Activated T-helper 2 cell treated with anti-CD3 and anti-CD28 coated beads, Interferon-gamma antibody, Interleukin-2, Interleukin-4, amounts not matched to agents 10 μg/mL and 5 μg/mL and 100 μg/mL, durations not matched to agents 14 hours and 24 hours and 36 hours (primary cell): ENCODE measurements at regions of chr3 and their contacts with region 1.

Region 1: DNA sequence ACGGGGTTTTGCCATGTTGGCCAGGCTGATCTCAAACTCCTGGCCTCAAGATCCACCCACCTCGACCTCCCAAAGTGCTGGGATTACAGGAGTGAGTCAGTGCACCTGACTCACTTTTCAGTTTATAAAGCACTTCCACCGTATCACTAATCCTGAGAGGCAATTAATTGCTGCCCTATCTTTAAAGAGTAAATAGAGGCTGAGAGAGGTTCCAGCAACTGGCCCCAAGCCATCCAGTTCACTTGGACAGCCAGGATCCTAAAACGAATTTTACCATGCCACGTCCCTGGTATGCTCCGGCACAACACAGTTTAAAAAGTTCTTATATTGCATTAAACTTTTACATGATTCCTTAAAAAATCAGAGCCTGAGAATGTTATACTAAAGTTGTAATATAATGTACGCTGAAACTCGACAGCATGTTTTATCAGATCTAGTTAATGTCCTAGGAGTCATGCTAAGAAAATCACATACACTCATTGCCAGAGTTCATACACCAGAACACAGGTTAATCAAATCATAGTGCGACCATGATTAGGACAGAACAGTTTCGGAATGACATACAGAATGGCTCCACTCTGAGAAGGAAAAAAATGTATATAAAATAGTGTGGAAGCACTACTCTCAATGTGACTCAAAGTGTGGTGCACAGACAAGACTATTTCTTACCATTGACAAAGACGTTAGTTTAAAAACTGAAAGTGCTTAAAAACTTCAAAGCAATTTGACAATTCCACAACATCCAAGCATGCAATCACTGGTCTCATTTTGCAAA is 125.4 kb downstream of the ULK4 start:
- DNase-seq: no peak
- H3K4me3 Mint-ChIP-seq: no peak overlapping the region
- H3K27ac Mint-ChIP-seq: peak overlapping the region; percentile 22
- H3K4me1 Mint-ChIP-seq: peaks cover 8% of the 10 kb centered on the region
- H3K27me3 Mint-ChIP-seq: no peaks in the 10 kb centered on the region

Region 2: DNA sequence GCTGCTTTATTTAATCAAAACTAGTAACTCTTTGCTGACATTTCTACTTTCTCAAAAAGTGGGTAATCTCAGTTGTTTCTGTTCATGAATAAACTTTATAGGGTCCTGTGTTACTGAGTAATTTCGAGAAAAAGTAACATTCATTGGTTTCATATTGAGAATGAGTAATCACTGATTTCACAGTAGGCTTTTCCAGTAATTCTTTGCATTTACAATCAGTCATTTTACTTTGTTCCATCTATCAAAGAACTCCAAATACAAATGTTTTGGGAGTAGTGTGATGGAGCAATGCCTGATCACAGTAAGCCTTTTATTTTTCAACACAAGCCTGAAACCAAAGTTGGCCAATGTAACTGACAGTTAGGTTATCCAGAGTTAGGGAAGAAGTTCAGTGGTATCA is 228.2 kb before region 1 on chr3:
- intact Hi-C with region 1: loop called (anchors 2 kb)
- DNase-seq: no peak
- H3K4me3 Mint-ChIP-seq: no peak overlapping the region
- H3K27ac Mint-ChIP-seq: no peak overlapping the region
- H3K4me1 Mint-ChIP-seq: peaks cover 8% of the 10 kb centered on the region
- H3K27me3 Mint-ChIP-seq: peaks cover 22% of the 10 kb centered on the region